ENCODE measurements at regions of chr3 and their contacts with region 1.

Region 1: DNA sequence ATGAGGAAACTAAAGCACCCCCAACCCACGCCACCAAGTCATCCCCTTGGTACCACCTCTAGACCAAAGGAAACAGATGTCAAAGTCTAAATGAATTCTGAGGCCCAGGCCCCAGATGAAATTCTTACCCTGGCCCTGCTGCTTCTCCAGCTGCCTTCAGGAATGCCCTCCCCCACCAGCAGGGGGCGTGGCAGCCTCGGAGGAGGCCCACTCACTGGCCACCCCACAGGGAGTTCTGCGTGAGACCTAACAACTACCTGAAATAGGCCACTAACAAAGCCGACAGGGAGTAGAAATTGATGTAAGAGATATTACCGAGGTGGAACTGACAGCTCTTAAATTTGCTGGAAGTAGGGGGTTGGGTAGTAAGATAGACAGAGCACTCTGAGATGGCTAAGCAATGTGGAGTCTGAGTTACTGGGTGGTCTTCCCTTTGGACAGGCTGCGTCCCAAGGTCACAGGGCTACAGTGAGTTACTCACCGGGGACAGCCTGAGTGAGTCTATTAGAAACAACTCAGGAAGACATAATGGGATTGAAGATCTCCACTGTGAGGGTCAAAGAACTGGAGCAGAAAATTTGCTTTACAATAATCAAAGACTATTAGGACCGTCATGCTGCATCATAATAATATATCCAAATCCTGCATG is 240.7 kb downstream of the SHOX2 start:
- DNase-seq: peak; percentile 26
- H3K4me3 ChIP-seq: no peak overlapping the region
- H3K27ac ChIP-seq: no peak overlapping the region
- H3K4me1 ChIP-seq: no peaks in the 10 kb centered on the region
- H3K27me3 ChIP-seq: no peaks in the 10 kb centered on the region
- CTCF ChIP-seq: peak; percentile 74 to 79
- POLR2A ChIP-seq: no peak

Region 2: DNA sequence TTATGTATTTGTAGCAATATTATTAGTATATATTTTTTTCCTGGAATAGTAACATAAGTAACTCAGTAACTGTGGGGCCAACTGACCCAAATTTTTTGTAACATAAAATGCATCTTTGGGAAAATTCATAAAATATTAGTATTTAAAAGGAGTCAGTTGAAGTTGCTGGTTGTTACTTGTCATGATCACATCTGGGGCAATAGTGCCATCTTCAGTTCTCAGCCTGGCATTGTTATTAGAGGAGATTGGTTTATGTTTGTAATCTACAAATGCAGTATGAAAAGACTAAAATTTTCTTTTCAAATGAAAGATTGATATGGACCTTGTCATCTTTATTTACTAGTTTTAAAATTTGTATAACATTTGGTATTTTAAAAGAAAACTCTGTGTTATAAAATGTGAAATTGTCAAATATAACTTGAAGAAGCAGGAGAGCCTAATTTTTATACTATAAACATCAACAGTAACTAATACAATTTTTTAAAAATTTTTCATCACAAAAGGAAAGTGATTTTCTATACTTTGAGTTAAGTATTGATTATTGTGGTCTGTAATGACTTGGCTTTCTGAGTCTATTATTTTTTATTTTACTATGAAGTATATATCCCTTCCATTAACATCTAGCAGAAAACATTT is 666.7 kb after region 1 on chr3:
- CTCF ChIA-PET with region 1: interaction called, 32 read pairs
- POLR2A ChIA-PET with region 1: no interaction called
- dilution Hi-C with region 1: no loop called
- intact Hi-C with region 1: loop called (anchors 1 kb)
- DNase-seq: peak; percentile 72
- H3K4me3 ChIP-seq: no peak overlapping the region
- H3K27ac ChIP-seq: no peak overlapping the region
- H3K4me1 ChIP-seq: no peaks in the 10 kb centered on the region
- H3K27me3 ChIP-seq: no peaks in the 10 kb centered on the region
- CTCF ChIP-seq: peak; percentile 36 to 46
- POLR2A ChIP-seq: no peak